Activated CD4-positive, alpha-beta memory T cell treated with anti-CD3 and anti-CD28 coated beads for 36 hours (primary cell): ENCODE measurements at regions of chr6 and their contacts with region 1.

Region 1: DNA sequence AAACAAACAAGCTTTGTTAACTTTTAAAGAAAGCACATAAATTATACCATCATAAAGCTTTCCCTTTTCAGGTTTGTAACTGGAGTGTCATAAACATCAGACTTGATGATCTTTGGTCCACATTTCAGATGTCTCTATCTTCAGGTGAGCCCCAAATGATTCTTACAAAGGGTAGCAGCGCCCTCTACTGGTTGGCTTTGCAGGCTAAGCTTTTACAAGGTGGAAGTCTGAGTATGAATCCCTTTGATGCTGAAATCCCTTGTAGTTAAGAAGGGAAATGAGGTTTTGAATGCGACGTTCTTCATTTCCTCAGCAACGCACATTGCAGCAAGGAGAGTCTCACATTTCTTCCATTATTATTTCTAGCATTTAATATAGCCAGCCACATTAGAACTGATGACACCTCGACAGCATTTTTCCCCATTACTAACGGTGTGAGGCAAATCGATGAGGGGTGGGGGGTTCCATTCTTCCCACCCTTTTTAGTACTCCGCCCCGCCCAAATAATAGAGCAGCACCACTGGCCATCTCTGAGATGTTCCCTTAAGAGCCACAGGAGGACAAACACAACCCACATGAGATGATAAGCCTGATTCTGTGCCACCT is 126.3 kb upstream of the NT5E start:
- DNase-seq: peak; percentile 78
- H3K4me3 Mint-ChIP-seq: no peak overlapping the region
- H3K27ac Mint-ChIP-seq: no peak overlapping the region
- H3K4me1 Mint-ChIP-seq: no peaks in the 10 kb centered on the region
- H3K27me3 Mint-ChIP-seq: peaks cover 1% of the 10 kb centered on the region

Region 2: DNA sequence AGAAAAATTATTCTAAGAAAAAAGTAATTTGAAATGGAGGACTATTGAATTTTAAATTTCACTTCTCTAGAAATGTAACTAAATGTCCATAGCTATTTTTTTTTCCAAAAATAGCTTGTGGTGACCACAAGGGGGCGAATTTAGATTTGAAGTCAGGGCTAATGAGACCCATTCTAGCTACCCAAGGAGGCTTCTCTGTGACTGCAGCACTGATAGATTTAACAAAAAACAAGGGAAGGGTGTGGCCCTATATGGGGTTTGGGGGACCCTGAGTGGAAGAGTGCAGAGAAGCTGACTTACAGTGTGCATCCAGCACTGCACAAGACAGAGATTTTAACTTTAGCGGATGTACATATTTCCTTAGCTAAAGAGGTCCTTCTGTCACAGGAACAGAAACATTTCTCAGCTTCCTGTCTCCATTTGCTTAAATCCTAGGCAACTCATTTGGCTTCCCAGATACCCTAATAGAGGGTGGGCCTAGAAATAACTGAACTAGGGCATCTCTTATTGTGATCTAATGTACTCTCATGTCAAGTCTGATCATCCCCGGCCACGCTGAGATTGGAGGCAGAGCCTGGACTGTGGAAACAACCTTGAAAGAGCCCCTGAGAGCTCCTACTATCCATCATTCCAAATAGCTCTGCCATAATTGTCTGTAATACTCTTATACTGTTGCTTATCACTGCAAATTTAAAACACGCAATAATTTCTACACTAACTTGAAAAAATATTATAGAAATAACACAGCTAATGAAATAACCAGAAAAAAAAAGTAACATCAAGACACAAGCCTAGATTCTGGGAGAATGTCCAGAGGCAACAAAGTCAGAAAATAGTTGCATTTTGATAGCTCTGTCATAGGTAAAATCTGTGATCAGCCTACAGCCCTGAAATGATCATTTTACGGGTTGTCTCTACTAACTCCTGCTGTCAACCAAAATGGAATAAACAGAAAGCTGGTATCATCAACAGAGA is 1708.2 kb before region 1 on chr6:
- CTCF ChIA-PET with region 1: interaction called, 10 read pairs
- POLR2A ChIA-PET with region 1: no interaction called
- intact Hi-C with region 1: loop called (anchors 10 kb)
- DNase-seq: no peak
- H3K4me3 Mint-ChIP-seq: no peak overlapping the region
- H3K27ac Mint-ChIP-seq: no peak overlapping the region
- H3K4me1 Mint-ChIP-seq: no peaks in the 10 kb centered on the region
- H3K27me3 Mint-ChIP-seq: no peaks in the 10 kb centered on the region

Region 3: DNA sequence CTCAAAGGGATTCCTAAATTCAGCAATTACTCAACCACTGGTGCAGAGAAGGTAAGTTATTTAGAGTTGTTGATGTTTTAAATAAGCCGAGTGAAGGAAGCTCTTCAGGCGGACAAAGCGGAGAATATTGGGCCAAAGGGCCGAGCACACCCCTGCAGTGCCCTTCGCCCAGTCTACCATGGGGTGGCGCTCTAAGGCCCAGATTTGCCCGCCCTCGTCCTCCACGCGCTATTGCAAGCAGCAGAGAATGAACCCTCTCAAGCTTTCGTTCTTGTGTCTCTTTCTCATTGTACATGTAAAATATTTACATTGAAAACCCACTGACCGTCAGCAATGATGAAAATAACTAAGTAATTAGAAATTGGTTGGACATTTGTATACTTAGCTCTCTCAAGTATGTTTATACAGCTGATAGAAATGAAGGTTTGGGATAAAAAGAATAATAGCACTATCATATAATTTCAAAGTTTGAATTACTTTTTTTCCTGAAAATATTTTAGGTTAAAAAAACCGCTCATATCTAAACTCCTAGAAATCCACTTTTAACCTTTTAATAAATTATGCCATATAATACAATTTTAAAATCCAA is 901.1 kb before region 1 on chr6:
- CTCF ChIA-PET with region 1: no interaction called
- POLR2A ChIA-PET with region 1: no interaction called
- intact Hi-C with region 1: loop called (anchors 5 kb)
- DNase-seq: peak; percentile 23
- H3K4me3 Mint-ChIP-seq: no peak overlapping the region
- H3K27ac Mint-ChIP-seq: no peak overlapping the region
- H3K4me1 Mint-ChIP-seq: no peaks in the 10 kb centered on the region
- H3K27me3 Mint-ChIP-seq: no peaks in the 10 kb centered on the region

Region 4: GRCh38 chr6:85126485-85127167 is 196.9 kb before region 1 on chr6:
- CTCF ChIA-PET with region 1: no interaction called
- POLR2A ChIA-PET with region 1: no interaction called
- intact Hi-C with region 1: loop called (anchors 5 kb)
- DNase-seq: peak; percentile 13
- H3K4me3 Mint-ChIP-seq: no peak overlapping the region
- H3K27ac Mint-ChIP-seq: no peak overlapping the region
- H3K4me1 Mint-ChIP-seq: no peaks in the 10 kb centered on the region
- H3K27me3 Mint-ChIP-seq: no peaks in the 10 kb centered on the region

Region 5: GRCh38 chr6:85460921-85461797 is 137.6 kb after region 1 on chr6:
- CTCF ChIA-PET with region 1: no interaction called
- POLR2A ChIA-PET with region 1: no interaction called
- intact Hi-C with region 1: no loop called
- DNase-seq: peak; percentile 60
- H3K4me3 Mint-ChIP-seq: no peak overlapping the region
- H3K27ac Mint-ChIP-seq: peak overlapping the region; percentile 72
- H3K4me1 Mint-ChIP-seq: peaks cover 55% of the 10 kb centered on the region
- H3K27me3 Mint-ChIP-seq: peaks cover 21% of the 10 kb centered on the region